ENCODE measurements at regions of chr22 and their contacts with region 1.

Region 1: DNA sequence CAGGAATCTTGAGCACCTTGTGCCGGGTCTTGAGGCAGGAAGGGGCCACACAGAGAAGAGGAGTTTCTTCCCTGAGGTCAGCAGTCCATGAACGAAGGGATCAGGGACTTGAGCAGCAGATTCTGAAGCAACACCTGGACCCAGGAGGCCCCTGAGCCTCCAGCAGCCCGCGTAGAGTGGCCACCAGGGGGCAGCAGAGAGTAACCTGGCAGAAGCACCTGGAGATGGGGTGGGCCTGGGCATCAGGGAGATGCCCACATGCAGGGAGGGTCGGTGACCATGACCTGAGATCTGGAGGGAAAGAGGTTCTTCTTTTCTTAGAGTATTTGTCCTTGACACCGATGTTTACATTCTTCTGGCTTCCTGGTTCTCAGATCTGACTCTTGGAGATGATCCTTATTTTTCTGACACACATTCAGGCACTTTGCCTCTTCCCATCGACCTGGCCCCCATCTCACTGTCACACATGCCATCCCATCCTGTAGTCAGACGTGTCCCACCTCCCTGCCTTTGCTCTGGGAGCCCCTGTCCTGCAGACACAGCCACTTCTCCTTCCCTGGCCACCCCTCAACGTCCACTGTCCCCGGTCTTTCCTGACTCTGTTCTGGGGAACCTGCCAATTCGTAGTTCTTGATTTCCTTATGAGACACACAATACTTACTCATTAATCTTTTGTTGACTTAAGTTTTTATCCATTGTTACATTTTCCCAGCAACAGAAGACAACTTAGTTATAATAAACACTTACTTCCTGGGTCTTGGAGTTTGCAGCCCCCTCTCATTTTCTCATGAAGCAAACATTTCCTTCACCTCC is 66.5 kb downstream of the GGTLC2 start:
- DNase-seq: peak; percentile 91
- H3K4me3 Mint-ChIP-seq: no peak overlapping the region
- H3K27ac Mint-ChIP-seq: no peak overlapping the region
- H3K4me1 Mint-ChIP-seq: no peaks in the 10 kb centered on the region
- H3K27me3 Mint-ChIP-seq: peaks cover 8% of the 10 kb centered on the region

Region 2: GRCh38 chr22:22616636-22617035 is 94.3 kb before region 1 on chr22:
- intact Hi-C with region 1: no loop called
- DNase-seq: peak; percentile 73
- H3K4me3 Mint-ChIP-seq: peak overlapping the region; percentile 13
- H3K27ac Mint-ChIP-seq: peak overlapping the region; percentile 64
- H3K4me1 Mint-ChIP-seq: peaks cover 12% of the 10 kb centered on the region
- H3K27me3 Mint-ChIP-seq: peaks cover 2% of the 10 kb centered on the region

Region 3: DNA sequence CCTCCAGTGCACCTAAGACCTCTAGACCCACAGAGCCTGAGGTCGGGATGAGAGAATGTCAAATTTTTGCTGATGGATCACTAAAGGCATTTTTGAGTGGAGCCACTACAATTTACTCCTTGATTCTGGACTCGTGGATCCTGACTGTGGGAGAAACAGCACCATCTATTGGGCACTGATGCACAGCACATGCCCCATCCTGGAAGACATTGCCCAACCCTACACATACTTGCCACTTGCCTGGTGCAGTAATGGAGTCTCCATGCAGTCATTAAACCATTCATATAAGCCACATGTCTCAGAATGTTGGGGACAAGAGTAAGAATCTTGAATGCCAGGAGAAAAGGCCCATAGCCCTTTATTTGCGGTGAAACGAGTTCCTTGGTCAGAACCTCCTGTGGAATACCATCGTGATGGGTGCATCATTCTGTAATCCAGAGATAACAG is 37.4 kb after region 1 on chr22:
- intact Hi-C with region 1: loop called (anchors 1 kb)
- DNase-seq: peak; percentile 78
- H3K4me3 Mint-ChIP-seq: no peak overlapping the region
- H3K27ac Mint-ChIP-seq: no peak overlapping the region
- H3K4me1 Mint-ChIP-seq: peaks cover 2% of the 10 kb centered on the region
- H3K27me3 Mint-ChIP-seq: peaks cover 3% of the 10 kb centered on the region